Testis (tissue), 5 donors: ENCODE measurements at regions of chr11 and their contacts with region 1.

Region 1: DNA sequence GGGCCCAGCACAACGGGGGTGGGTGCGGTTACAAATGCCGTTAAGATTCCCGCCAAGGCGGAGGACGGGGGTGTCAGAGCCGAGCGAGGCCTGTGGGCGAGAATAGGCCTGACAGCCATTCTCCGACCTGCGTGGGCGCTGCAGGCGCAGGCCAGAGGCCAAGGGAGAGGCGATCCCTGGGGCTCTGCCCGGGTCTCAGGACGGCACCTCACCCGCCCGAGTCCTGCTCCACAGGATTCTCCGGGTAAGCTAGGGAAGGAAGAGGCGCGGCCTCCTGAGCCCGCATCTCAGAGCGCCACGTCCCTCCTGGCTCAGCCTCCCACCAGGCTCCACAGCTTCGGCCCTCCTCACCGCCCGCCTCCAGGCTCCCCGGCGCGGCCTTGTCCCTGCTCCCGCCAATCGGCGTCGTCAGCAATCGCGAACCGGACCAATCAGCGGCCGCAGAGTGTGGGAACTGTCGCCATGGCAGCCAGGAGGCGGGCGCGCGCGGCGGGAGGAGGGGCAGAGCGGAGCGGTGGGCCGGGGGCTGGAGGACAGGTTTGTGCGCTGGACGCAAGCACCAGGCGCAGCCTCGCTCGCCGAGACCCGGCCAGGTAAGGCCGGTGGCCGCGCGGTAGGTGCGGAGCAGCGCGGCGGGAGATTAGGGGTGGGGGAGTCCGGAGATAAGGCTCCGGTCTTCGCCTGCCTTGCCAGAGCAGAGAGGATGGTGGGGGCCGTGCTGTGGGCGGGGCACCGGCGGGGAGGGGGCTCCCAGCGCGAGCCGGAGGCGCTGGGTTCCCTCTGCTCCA is at the start of gene NUCB2:
- DNase-seq: peak; percentile 99
- H3K4me3 ChIP-seq: peak within 1 kb of the TSS; percentile 79 to 84
- H3K27ac ChIP-seq: peak within 1 kb of the TSS; percentile 87 to 93
- H3K4me1 ChIP-seq: no peaks in the 10 kb centered on the region
- H3K27me3 ChIP-seq: no peaks in the 10 kb centered on the region
- CTCF ChIP-seq: no peak
- POLR2A ChIP-seq: peak; percentile 68
- total RNA-seq, gene NUCB2: 138 to 186 TPM

Region 2: DNA sequence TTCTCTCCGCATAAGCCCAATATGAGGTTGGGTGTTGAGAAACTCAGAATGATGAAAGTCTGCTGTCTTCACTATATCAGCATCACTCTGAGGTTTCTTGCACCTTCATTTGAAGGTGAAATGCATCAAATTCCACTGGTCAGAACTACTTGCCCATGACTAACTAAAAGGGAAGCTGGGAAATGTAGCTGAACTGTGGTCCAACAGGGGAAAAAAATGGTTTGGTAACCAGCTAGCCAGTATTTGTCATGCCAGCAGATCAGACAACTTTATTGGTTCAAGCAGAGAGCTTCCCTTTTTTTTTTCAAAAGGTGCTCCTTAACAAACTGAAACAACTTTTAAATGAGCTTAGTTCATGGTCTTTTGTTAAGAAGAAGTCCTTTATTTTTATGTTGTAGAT is 54.5 kb before region 1 on chr11:
- intact Hi-C with region 1: loop called (anchors 10 kb)
- DNase-seq: no peak
- H3K4me3 ChIP-seq: no peak overlapping the region
- H3K27ac ChIP-seq: no peak overlapping the region
- H3K4me1 ChIP-seq: peaks cover 6% of the 10 kb centered on the region
- H3K27me3 ChIP-seq: no peaks in the 10 kb centered on the region
- CTCF ChIP-seq: no peak
- POLR2A ChIP-seq: no peak